Cardiac septum (tissue), 1 donor: ENCODE measurements at regions of chr5 and their contacts with region 1.

Region 1: DNA sequence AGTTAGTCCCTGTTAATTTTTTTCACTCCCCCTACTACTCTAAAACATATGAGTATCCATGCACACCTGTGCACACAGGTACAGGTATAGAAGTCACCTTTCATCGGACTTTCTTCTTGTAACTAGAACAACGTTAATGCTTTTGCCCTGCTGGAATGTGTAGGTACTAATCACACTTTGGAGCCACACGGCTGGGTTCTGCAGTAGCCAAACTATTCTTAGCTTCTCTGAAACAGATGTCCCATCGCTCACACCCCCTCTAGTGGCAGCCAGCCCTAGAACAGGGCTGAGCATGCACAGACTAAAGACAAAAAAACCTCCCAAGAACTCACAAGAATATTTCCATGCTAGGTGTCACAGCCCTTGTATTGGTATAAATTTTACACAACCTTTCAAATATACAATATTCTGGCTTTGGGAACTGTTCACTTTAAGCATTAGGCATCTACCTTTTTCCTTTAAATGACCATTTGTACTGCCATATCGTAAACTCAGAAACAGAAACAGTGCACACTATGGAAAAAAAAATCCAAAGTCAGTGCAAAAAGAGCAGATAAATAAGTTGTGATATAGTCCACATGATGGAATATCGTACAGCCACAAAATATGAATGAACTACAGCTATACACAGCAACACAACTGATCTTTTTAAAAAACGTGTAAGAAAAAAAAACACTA is 64.0 kb downstream of the RETREG1 start:
- DNase-seq: peak; percentile 83

Region 2: DNA sequence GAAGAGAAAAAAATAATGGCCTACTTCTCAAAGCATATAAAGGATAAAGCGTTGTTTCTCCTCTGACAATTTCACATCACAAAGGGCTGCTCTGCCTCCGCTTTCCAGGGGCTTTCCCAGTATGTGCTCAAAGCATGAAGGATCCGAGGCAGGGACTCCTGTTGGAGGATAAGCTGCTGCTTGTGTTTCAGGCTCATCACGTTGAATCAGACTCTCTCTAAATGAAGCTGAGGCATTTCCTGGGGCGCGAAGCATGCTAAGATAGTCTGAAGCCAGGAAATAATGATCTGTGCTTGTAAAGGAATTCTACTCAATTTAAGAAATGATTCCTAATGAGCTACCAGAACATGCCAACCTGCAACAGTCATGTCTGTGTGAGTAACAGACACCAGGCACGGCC is 470.8 kb before region 1 on chr5:
- intact Hi-C with region 1: no loop called
- DNase-seq: no peak

Region 3: DNA sequence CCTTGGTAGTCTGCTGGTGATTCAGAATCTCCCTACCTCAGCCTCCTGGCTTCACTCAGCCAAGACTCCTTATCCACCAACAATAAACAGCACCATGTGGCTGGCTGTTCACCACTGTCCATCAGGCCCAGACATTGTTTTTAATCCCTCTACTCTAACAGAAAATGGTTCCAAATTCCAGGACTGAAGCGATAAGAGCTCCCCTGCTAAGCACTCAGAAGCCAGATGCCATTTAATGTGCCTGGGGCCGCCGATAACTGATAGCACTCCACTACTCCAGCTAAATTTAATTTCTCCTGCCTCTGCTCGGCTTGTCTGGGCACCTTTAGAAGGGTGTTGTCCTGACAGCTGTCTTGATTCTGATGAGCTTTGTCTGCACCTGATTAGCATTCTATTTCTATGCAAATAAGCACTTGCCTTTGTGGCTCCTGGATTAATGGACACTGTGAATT is 134.3 kb before region 1 on chr5:
- intact Hi-C with region 1: no loop called
- DNase-seq: no peak

Region 4: GRCh38 chr5:16465544-16466466 is 87.0 kb before region 1 on chr5 and contains the start of gene ZNF622:
- intact Hi-C with region 1: loop called (anchors 2 kb)
- DNase-seq: peak; percentile 97
- total RNA-seq, gene ZNF622: 49.0 TPM